Heart right ventricle (tissue), 16 donors: ENCODE measurements at regions of chrX and their contacts with region 1.

Region 1: DNA sequence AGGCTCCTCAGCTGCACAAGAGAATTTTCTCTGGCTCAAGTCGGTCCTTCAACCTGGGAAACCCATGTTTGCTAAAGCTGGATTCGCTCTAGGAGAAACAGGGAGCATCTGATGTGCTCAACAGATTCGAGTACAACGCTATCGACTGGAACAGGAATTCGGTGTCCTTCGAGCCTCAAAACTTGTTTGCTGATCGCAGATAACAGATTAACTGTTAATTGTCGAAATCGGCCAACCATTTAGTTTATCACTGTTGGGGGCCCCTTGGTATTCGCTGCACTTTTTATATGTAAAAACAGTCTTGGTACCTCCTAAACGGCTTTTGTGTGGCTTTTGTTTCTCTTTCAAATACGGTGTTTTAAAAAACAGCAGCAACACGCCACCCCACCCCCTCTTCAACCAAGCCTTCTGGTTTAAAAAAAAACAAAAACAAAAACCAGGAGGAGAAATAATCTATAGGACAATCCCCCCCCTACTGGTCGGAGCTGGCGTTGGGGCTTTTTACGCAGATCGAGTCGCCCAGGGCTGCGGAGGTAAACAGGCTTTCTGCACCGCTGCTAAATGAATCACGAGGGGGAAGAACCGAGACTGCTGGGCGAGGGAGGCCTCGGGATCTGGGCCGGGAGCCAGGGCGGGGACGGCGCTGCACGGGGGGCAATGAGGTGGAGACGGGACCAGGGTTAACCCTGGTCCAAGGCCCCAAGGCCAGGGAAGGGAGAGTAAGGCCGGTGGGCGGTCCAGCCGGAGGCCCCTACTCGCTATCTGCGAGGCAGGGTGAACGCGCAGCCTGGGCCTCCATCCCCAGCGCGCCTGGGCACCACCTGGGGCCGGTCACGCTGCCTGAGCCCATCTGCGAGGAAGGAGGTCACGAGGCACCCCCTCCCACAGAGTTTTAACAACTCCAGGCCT is 71.7 kb upstream of the BCOR start:
- DNase-seq: no peak
- ATAC-seq: no peak
- H3K4me3 ChIP-seq: peak overlapping the region in 2 of 10 donors; percentile 8 to 19
- H3K27ac ChIP-seq: peak overlapping the region in 1 of 10 donors; percentile 93
- H3K4me1 ChIP-seq: peaks cover 0 to 71% (median 35%) of the 10 kb centered on the region in 9 donors
- H3K27me3 ChIP-seq: peaks cover 0 to 97% (median 0%) of the 10 kb centered on the region in 7 donors
- CTCF ChIP-seq: peak in 5 of 9 donors; percentile 13 to 47 (median 18)

Region 2: DNA sequence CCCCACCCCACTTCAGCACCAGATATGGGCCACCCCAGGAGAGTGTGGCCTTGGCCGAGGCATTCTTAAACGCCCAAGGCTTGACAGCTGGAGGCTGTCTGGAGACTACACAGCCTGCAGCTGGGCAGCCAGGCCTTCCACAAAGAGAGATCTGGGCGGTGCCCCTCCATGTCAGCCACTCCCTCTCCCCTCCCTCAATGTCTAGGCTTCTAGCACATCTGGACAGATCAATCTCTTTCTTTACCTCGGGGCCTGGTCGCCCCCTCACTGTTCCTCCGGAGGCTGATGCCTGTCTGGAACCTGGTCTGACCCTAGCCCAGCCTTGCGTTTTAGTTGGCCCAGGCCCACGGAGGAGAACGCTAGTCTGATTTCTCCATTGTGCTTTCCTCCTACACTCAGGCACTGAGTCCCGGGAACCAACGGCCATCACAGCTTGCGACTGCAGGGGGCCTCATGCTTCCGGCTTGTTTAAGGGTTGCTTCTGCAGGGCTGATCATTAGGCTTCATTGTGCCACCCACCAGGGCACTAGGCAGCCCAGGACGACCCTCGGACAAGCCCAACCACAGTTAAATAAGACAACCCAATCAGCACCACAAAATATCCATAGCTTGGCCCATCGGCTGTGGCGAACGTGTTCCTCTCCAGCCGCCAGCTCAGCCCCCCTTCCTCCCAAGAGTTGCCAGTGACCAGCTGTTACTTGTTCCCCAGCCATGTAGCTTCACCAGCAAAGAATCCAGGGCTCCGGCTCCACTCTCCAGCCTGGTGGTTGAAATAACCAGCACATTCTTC is 272.3 kb before region 1 on chrX:
- intact Hi-C with region 1: loop called in 1 of 10 experiments (anchors 10 kb)
- DNase-seq: peak; percentile 20 to 33
- ATAC-seq: peak; percentile 46 to 77 (median 65)
- H3K4me3 ChIP-seq: no peak overlapping the region
- H3K27ac ChIP-seq: peak overlapping the region in 8 of 10 donors; percentile 1 to 64 (median 37)
- H3K4me1 ChIP-seq: peaks cover 3 to 41% (median 17%) of the 10 kb centered on the region in 9 donors
- H3K27me3 ChIP-seq: peaks cover 0 to 33% (median 0%) of the 10 kb centered on the region in 7 donors
- CTCF ChIP-seq: peak in 4 of 9 donors; percentile 12 to 31 (median 20)

Region 3: DNA sequence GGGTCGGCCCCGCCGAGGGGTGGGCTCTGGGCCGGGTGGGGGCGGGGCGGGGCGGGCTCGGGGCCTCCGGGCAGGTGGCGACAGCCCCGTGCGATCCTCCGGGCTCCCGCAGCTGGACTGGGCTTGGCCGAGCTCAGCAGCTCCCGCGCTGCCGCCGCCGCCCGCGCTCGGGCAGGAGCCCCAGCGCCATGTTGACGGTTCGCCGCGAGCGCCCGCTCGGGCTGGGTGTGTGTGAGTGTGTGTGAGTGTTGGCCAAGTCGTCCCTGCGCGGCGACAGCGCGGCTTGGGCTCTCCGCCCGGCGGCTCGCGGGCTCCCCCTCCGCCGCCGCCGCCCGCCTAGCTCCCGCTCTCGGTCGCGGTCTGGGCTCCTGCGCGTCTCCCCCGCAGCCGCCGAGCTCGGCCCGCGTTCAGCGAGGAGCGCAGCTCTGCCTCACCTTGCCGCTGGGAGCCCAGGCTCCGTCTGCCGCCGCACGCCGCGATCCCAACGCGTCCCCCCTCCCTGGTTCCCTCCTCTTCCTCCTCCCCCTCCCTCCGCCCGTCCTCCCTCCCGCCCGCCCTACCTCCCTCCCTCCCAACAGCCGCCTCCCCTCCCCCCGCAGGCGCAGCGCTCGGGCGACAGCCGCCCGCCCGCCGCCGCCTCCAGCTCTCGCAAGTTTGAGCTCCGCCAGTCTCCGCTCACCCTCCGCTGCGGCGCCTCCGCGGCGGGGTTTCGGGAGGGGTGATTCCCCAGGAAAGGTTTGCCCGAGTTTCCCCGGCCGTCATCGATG is 71.8 kb before region 1 on chrX and contains the start of gene BCOR:
- intact Hi-C with region 1: loop called in 3 of 10 experiments (anchors 5 kb)
- DNase-seq: peak; percentile 72 to 80
- ATAC-seq: peak; percentile 26 to 63 (median 56)
- H3K4me3 ChIP-seq: peak within 1 kb of the TSS; percentile 70 to 88 (median 82)
- H3K27ac ChIP-seq: peak within 1 kb of the TSS; percentile 84 to 94 (median 92)
- H3K4me1 ChIP-seq: peaks cover 0 to 40% (median 17%) of the 10 kb centered on the region in 9 donors
- H3K27me3 ChIP-seq: peaks cover 0 to 99% (median 0%) of the 10 kb centered on the region in 7 donors
- CTCF ChIP-seq: peak in 1 of 9 donors; percentile 20
- total RNA-seq, gene BCOR: 12.4 to 27.2 (median 19.9) TPM

Region 4: DNA sequence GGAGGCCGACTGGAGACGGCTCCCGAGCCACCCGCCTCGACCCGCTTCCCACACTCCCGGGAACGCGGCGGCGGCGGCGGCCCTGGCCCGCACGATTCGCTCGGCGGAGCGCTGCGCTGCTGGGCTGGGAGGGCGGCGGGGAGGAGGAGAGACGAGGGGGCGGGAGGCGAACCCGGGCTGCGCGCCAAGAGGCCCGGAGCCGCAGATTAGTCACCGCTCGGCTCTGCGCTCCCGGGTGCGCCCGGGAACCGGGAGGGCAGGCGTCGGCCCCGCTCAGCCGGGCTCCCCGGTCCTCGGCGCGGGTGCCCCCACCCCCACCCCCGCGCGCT is 60.5 kb before region 1 on chrX:
- intact Hi-C with region 1: loop called in 1 of 10 experiments (anchors 5 kb)
- DNase-seq: peak; percentile 74 to 84
- ATAC-seq: peak; percentile 60 to 82 (median 68)
- H3K4me3 ChIP-seq: peak overlapping the region; percentile 28 to 75 (median 59)
- H3K27ac ChIP-seq: peak overlapping the region; percentile 84 to 96 (median 93)
- H3K4me1 ChIP-seq: peaks cover 2 to 44% (median 34%) of the 10 kb centered on the region in 9 donors
- H3K27me3 ChIP-seq: peaks cover 0 to 73% (median 0%) of the 10 kb centered on the region in 7 donors
- CTCF ChIP-seq: no peak